Activated CD4-positive, alpha-beta T cell treated with anti-CD3 and anti-CD28 coated beads for 36 hours (primary cell): ENCODE measurements at regions of chr3 and their contacts with region 1.

Region 1: GRCh38 chr3:118884748-118885206 is 149.9 kb downstream of the IGSF11 start:
- DNase-seq: peak; percentile 89
- ATAC-seq: peak; percentile 89
- H3K4me3 Mint-ChIP-seq: no peak overlapping the region
- H3K27ac Mint-ChIP-seq: no peak overlapping the region
- H3K4me1 Mint-ChIP-seq: peaks cover 3% of the 10 kb centered on the region
- H3K27me3 Mint-ChIP-seq: peaks cover 17% of the 10 kb centered on the region

Region 2: DNA sequence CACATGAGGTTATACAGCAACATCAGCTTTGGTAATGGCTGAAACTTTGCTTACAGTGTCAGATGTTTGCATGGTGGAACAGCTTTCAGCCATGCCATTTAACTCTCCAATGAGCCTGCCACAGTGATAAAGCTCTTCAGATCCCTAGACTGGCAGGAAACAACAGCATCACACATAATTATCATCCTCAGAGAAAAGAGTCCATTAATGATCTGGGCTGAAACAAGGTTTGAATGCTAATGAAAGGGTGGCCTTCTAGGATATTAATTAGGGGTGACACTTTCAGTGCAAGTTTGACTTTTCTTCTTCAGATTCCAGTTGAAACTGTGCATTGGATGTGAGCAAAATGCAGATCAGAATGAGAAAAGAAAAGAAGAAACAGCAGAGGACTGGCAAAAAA is 16.7 kb before region 1 on chr3:
- CTCF ChIA-PET with region 1: interaction called, 11 read pairs
- POLR2A ChIA-PET with region 1: no interaction called
- intact Hi-C with region 1: no loop called
- DNase-seq: no peak
- ATAC-seq: no peak
- H3K4me3 Mint-ChIP-seq: no peak overlapping the region
- H3K27ac Mint-ChIP-seq: no peak overlapping the region
- H3K4me1 Mint-ChIP-seq: no peaks in the 10 kb centered on the region
- H3K27me3 Mint-ChIP-seq: peaks cover 15% of the 10 kb centered on the region

Region 3: DNA sequence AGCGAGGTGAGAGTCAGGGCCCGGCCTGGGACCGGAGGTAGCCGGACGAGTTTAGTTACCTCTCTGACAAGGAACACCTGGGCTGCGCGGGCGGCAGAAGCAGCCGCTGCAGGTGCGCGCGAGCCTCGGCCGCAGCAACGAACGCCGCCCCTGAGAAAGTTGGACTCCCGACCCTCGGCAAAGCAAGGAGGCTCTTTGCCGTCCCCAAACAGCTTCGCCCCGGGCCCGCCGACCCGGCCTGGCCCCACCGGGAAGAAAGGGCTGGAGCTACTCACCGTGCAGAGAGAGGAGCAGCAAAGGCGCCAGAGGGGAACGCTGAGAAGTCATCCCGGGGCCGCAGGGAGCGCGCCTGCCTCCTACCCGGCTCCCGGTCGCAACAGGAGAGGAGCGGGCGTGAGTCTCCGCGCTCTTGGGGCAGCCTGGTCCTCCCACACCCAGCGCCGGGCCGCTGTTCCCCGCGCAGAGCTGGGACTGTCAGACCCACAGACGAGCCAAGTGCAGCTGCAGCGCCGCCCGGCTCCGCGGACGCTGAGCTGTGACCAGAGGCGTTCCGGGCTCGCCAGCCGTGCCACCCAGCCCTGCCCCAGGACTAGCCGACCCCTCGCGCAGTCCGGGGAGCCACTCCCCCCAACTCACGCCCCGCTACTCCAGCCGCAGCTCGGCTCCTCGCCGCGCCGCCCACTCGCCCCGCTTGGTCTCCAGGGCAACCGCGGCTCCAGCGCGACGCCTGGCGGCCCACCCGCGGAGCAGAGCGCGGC is 149.7 kb after region 1 on chr3 and contains the start of gene IGSF11:
- CTCF ChIA-PET with region 1: interaction called, 240 read pairs
- POLR2A ChIA-PET with region 1: interaction called, 6 read pairs
- intact Hi-C with region 1: loop called (anchors 1 kb)
- DNase-seq: peak; percentile 82
- ATAC-seq: peak; percentile 93
- H3K4me3 Mint-ChIP-seq: peak within 1 kb of the TSS; percentile 77
- H3K27ac Mint-ChIP-seq: no peak within 1 kb of the TSS
- H3K4me1 Mint-ChIP-seq: peaks cover 6% of the 10 kb centered on the region
- H3K27me3 Mint-ChIP-seq: peaks cover 33% of the 10 kb centered on the region
- total RNA-seq, gene IGSF11: 0.09 to 0.23 TPM

Region 4: DNA sequence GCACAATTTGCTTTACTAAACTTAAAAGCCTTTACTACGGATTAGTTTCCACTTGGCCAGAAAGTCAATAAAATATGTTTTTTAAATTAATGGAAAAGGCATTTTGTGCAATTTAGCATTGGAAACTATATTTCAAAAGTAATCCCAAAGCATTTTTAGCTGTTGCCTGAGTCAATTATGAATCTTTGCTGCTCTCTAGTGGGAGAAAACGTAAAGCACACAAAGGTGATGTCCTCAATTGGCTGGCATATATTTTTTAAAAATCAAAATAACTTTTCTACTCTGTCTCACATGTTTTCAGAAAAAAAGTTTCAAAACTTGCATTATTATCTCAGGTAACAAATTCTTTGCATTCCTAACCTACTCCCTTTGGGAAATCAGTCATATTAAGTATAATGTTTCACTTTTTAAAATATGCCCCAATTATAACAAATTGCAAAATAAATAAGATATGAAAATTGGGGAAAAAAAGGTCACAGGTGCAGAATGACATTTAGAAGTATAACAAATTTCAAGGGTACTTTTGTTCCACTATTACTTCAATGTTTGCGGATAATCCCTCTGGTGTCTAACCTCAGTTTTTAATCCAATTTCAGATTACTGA is 213.9 kb after region 1 on chr3:
- CTCF ChIA-PET with region 1: interaction called, 331 read pairs
- POLR2A ChIA-PET with region 1: no interaction called
- intact Hi-C with region 1: loop called (anchors 1 kb)
- DNase-seq: no peak
- ATAC-seq: peak; percentile 36
- H3K4me3 Mint-ChIP-seq: no peak overlapping the region
- H3K27ac Mint-ChIP-seq: no peak overlapping the region
- H3K4me1 Mint-ChIP-seq: no peaks in the 10 kb centered on the region
- H3K27me3 Mint-ChIP-seq: no peaks in the 10 kb centered on the region

Region 5: GRCh38 chr3:119352849-119353502 is 468.2 kb after region 1 on chr3:
- CTCF ChIA-PET with region 1: interaction called, 8 read pairs
- POLR2A ChIA-PET with region 1: no interaction called
- intact Hi-C with region 1: loop called (anchors 2 to 5 kb)
- DNase-seq: no peak
- ATAC-seq: peak; percentile 63
- H3K4me3 Mint-ChIP-seq: no peak overlapping the region
- H3K27ac Mint-ChIP-seq: peak overlapping the region; percentile 32
- H3K4me1 Mint-ChIP-seq: peaks cover 34% of the 10 kb centered on the region
- H3K27me3 Mint-ChIP-seq: no peaks in the 10 kb centered on the region